Astrocyte of the cerebellum (primary cell): ENCODE measurements at regions of chr2 and their contacts with region 1.

Region 1: GRCh38 chr2:236550701-236551465 is 18.7 kb upstream of the ACKR3 start:
- DNase-seq: no peak
- H3K4me3 ChIP-seq: no peak overlapping the region
- CTCF ChIP-seq: no peak

Region 2: DNA sequence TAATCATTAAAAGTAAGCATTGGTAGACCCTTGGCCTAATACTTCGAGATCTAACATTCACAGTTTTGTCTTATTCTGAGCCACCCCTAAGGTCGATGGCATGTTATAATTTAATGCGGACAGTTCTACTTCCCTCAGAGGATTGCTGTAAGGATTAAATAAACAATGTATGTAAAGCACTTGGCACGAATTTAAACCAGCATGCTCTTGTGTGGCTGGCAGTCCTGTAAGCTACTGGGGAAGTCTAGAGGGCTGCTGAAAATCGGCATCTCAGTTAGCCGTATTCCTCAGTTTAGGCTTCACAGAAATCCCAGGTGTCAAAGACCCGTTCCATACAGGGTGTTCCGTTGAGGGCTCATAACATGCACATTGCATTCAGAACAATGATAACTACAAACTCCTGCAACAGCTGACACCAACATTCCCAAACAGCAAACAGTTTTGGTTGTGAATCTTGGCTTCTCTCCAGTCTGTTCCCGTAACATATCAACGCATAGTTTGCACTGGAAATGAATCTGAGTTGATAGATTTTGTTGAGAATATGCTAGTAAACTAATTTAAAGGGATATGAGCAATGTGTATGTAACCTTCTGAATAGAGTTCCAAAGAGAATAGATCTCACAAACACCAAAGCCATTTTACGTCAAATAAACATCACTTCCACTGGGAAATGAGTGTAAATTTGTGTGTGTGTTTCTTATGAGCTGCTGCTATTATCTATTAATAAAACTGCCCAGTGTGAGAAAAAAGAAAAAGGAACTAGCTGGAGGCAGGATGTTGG is 33.4 kb before region 1 on chr2:
- in situ Hi-C with region 1: loop called (anchors 5 kb)
- DNase-seq: no peak
- H3K4me3 ChIP-seq: no peak overlapping the region
- CTCF ChIP-seq: no peak

Region 3: GRCh38 chr2:236582968-236583367 is 32.1 kb after region 1 on chr2:
- in situ Hi-C with region 1: no loop called
- DNase-seq: no peak
- H3K4me3 ChIP-seq: no peak overlapping the region
- CTCF ChIP-seq: no peak